Natural killer cell (primary cell): ENCODE measurements at regions of chr14 and their contacts with region 1.

Region 1: GRCh38 chr14:64720131-64720576 is 15.9 kb downstream of the PLEKHG3 start:
- DNase-seq: no peak
- ATAC-seq: no peak
- H3K4me3 ChIP-seq: no peak overlapping the region
- H3K4me3 Mint-ChIP-seq: peak overlapping the region; percentile 56
- H3K27ac ChIP-seq: peak overlapping the region; percentile 81
- H3K27ac Mint-ChIP-seq: peak overlapping the region; percentile 76 to 86
- H3K4me1 ChIP-seq: peaks cover 99% of the 10 kb centered on the region
- H3K4me1 Mint-ChIP-seq: peaks cover 94 to 96% of the 10 kb centered on the region in 2 donors
- H3K27me3 ChIP-seq: no peaks in the 10 kb centered on the region
- H3K27me3 Mint-ChIP-seq: no peaks in the 10 kb centered on the region
- CTCF ChIP-seq: no peak

Region 2: DNA sequence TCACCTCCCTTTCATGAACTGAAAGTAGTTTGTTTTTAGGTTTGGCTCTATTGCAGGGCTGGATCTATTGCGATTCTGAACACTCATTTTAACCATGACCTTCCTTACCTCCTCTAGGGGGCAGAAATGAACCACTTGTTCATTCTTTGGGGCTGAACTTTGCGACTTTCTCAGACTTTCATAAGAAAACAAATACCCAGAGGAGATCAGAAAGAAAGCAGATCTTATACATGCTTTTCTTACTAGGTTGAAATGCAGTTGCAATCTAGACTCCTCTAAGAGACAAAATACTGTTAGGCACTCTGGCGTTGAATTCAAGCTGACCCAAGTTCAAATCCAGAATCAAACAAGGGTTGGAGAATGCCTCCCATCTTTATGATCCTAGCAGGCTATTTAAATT is 48.6 kb before region 1 on chr14:
- intact Hi-C with region 1: loop called (anchors 5 kb)
- DNase-seq: peak in 1 of 2 donors; percentile 80
- ATAC-seq: peak; percentile 54 to 70 (median 58)
- H3K4me3 ChIP-seq: no peak overlapping the region
- H3K4me3 Mint-ChIP-seq: peak overlapping the region; percentile 13
- H3K27ac ChIP-seq: no peak overlapping the region
- H3K27ac Mint-ChIP-seq: peak overlapping the region in 1 of 2 donors; percentile 61
- H3K4me1 ChIP-seq: peaks cover 34% of the 10 kb centered on the region
- H3K4me1 Mint-ChIP-seq: peaks cover 30 to 31% of the 10 kb centered on the region in 2 donors
- H3K27me3 ChIP-seq: no peaks in the 10 kb centered on the region
- H3K27me3 Mint-ChIP-seq: peaks cover 0 to 2% of the 10 kb centered on the region in 2 donors
- CTCF ChIP-seq: peak; percentile 69

Region 3: DNA sequence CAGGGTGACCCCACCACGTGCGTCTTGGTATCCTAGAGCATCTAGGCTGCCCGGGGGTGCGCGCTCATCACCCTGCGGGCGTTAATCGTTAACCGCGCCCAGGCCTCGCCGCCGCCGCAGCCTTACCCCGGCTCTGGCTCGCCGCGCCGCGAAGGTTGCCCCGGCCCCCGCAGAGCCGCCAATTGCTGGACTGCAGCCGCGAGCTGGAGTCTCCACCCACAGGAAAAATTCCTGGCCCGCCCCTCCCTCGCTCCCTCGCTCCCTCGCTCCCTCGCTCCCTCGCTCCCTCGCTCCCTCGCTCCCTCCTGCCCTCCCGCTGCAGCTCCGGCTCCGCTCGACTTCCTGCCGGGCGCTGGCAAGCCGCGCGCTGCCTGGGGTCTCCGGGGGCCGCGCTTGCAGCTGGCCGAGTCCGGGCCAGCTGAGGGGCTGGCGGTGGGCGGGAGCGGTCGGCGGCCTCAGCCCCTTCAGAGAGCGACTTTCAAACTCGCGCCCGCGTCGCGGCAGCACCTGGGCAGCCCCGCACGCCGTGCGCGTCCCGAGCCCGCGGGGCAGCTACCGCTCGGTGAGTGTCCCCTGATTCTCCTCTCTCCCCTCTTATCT is 15.9 kb before region 1 on chr14 and contains the start of gene PLEKHG3:
- intact Hi-C with region 1: loop called (anchors 1 kb)
- DNase-seq: peak; percentile 59 to 69
- ATAC-seq: peak; percentile 45 to 64 (median 63)
- H3K4me3 ChIP-seq: peak within 1 kb of the TSS; percentile 67
- H3K4me3 Mint-ChIP-seq: peak within 1 kb of the TSS; percentile 87
- H3K27ac ChIP-seq: peak within 1 kb of the TSS; percentile 77
- H3K27ac Mint-ChIP-seq: peak within 1 kb of the TSS; percentile 76 to 86
- H3K4me1 ChIP-seq: peaks cover 63% of the 10 kb centered on the region
- H3K4me1 Mint-ChIP-seq: peaks cover 53 to 54% of the 10 kb centered on the region in 2 donors
- H3K27me3 ChIP-seq: no peaks in the 10 kb centered on the region
- H3K27me3 Mint-ChIP-seq: no peaks in the 10 kb centered on the region
- CTCF ChIP-seq: no peak
- total RNA-seq, gene PLEKHG3: 184 to 285 (median 225) TPM

Region 4: DNA sequence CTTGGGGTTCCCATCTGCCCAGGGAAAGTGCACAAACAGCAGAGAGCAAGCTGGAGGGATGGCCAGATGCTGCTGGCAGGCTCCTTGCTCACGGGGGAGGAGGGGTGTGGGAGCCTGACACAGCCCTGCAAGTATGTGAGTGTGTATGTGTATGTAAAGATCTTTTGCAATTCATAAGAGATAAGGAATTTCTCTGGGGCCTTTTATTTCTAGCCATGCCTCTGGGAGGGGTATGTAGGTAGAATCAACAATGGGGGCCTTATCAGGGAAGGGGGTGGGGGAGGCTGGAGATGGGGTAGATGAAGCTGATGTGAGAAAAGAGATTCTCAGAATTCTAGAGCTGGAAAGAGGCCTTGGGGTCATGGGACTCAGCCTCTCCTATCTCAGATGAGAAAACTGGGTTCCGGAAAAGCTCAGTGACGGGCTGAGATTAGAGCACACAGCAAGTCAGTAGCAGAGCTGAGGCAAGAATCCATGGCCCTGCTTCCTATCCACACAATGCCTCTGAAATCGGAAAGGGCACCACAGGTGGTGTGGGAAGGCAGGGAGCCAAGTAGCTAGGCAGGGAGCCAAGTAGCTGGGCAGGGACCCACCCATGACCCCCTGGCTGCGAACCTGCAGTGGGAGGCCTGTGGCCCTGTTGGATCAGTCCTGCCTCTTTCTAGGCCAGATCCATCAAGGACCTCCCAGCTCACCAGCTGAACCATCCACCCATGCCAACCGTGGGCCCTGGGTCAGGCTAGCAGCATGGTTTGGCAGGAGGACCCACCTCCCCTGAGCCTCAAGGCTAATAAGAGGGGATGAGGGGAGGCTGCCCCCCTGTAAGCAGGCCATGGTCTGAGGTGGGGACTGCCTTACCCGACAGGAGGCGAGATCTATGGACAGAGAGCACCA is 38.8 kb after region 1 on chr14:
- intact Hi-C with region 1: loop called (anchors 5 kb)
- DNase-seq: no peak
- ATAC-seq: no peak
- H3K4me3 ChIP-seq: no peak overlapping the region
- H3K4me3 Mint-ChIP-seq: peak overlapping the region; percentile 62
- H3K27ac ChIP-seq: peak overlapping the region; percentile 73
- H3K27ac Mint-ChIP-seq: peak overlapping the region; percentile 70 to 85
- H3K4me1 ChIP-seq: peaks cover 100% of the 10 kb centered on the region
- H3K4me1 Mint-ChIP-seq: peaks cover 76 to 98% of the 10 kb centered on the region in 2 donors
- H3K27me3 ChIP-seq: peaks cover 6% of the 10 kb centered on the region
- H3K27me3 Mint-ChIP-seq: peaks cover 0 to 12% of the 10 kb centered on the region in 2 donors
- CTCF ChIP-seq: no peak